ENCODE measurements at regions of chr21 and their contacts with region 1.

Region 1: DNA sequence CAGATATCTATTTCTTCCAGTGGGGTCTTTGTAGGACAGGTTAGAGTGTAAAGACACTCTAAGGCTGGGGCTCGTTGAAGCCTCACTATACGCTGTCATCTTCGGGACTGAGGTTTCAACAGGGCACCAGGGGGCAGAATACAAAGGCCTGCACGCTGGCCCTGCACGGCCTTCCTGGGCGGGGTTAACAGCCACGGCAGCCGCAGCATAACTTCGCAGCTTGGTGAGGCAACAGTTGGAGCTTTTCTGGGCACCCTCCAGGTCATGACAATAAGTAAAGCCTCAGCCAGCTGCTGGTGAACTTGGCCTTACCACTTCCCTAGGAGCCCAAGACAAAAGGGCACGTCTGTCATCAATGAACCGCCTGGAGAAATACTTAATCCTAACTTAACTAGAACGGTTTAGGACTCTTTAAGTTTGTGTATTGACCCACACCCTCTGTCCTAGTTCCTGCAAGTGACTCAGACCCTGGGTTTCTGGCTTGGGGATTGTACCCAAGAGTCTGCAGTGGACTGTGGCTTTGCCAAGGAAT is 2.3 kb upstream of the RUNX1 start:
- DNase-seq: peak; percentile 92
- ATAC-seq: peak; percentile 44
- H3K4me3 Mint-ChIP-seq: peak overlapping the region; percentile 24
- H3K27ac Mint-ChIP-seq: peak overlapping the region; percentile 97
- H3K4me1 Mint-ChIP-seq: peaks cover 57% of the 10 kb centered on the region
- H3K27me3 Mint-ChIP-seq: no peaks in the 10 kb centered on the region
- CTCF ChIP-seq: peak; percentile 64

Region 2: DNA sequence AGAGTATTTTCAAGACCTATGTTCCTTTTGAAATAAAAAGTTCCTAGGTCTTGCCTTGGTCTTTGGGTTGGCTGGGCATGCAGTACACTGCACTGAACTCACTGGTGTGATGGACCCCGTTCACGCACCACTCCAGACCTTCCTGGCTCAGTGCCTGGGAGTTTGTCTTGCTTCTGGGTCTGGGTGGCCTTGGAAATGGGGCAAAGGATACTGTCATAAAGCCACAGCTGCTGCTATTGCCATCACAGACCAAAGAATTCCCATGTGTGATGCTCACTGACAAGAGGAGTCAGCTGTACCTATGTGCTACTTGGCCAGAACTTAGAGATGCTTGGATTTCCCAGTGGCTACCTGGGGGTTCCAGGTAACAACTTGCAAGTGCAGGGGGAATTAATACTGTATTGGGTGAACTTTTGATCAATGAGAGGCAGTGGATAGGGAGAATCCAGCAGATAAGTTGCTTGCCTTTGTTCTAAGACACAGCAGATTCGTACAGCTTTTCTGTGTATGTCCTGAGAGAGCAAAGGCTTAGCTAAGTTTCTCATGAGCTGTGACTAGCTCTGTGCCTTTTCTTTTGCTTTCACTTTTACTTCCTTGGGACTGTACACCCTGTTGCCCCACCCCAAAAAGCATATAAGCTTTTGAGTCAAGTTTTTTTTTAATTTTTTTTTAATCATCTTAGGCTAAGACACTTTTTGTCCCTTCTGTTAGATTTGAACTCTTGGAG is 117.6 kb before region 1 on chr21:
- CTCF ChIA-PET with region 1: interaction called, 7 read pairs
- POLR2A ChIA-PET with region 1: interaction called, 38 read pairs
- intact Hi-C with region 1: no loop called
- DNase-seq: peak; percentile 49
- ATAC-seq: peak; percentile 84
- H3K4me3 Mint-ChIP-seq: peak overlapping the region; percentile 75
- H3K27ac Mint-ChIP-seq: peak overlapping the region; percentile 98
- H3K4me1 Mint-ChIP-seq: peaks cover 82% of the 10 kb centered on the region
- H3K27me3 Mint-ChIP-seq: no peaks in the 10 kb centered on the region
- CTCF ChIP-seq: no peak

Region 3: GRCh38 chr21:34974162-34974981 is 77.0 kb before region 1 on chr21:
- CTCF ChIA-PET with region 1: interaction called, 5 read pairs
- POLR2A ChIA-PET with region 1: interaction called, 12 read pairs
- intact Hi-C with region 1: loop called (anchors 5 kb)
- DNase-seq: peak; percentile 69
- ATAC-seq: peak; percentile 92
- H3K4me3 Mint-ChIP-seq: peak overlapping the region; percentile 52
- H3K27ac Mint-ChIP-seq: peak overlapping the region; percentile 61
- H3K4me1 Mint-ChIP-seq: peaks cover 79% of the 10 kb centered on the region
- H3K27me3 Mint-ChIP-seq: peaks cover 3% of the 10 kb centered on the region
- CTCF ChIP-seq: no peak

Region 4: DNA sequence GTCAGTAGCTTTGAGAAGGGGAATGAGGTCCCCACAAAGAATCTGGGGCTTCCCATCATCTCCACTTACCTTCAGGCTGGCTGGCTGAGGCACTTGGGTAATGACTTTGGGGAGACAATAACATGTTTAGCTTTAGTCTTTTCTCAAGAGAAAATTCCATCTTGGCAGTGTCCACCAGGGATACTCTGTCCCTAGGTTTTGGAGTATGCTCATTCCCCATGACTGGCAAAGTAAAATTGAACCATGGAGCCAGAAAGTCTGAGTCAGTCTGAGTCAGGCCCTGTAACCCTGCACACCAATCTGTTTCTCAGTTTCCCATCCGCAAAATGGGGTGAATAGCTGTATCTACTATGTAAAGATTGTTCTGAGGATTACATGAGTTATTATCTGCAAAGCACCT is 30.5 kb before region 1 on chr21:
- CTCF ChIA-PET with region 1: interaction called, 16 read pairs
- POLR2A ChIA-PET with region 1: interaction called, 100 read pairs
- intact Hi-C with region 1: no loop called
- DNase-seq: no peak
- ATAC-seq: no peak
- H3K4me3 Mint-ChIP-seq: no peak overlapping the region
- H3K27ac Mint-ChIP-seq: peak overlapping the region; percentile 67
- H3K4me1 Mint-ChIP-seq: peaks cover 82% of the 10 kb centered on the region
- H3K27me3 Mint-ChIP-seq: no peaks in the 10 kb centered on the region
- CTCF ChIP-seq: no peak

Region 5: GRCh38 chr21:35086357-35086756 is 35.0 kb after region 1 on chr21:
- CTCF ChIA-PET with region 1: interaction called, 5 read pairs
- POLR2A ChIA-PET with region 1: interaction called, 5 read pairs
- intact Hi-C with region 1: loop called (anchors 2 kb)
- DNase-seq: no peak
- ATAC-seq: no peak
- H3K4me3 Mint-ChIP-seq: no peak overlapping the region
- H3K27ac Mint-ChIP-seq: no peak overlapping the region
- H3K4me1 Mint-ChIP-seq: peaks cover 20% of the 10 kb centered on the region
- H3K27me3 Mint-ChIP-seq: peaks cover 2% of the 10 kb centered on the region
- CTCF ChIP-seq: no peak

Region 6: DNA sequence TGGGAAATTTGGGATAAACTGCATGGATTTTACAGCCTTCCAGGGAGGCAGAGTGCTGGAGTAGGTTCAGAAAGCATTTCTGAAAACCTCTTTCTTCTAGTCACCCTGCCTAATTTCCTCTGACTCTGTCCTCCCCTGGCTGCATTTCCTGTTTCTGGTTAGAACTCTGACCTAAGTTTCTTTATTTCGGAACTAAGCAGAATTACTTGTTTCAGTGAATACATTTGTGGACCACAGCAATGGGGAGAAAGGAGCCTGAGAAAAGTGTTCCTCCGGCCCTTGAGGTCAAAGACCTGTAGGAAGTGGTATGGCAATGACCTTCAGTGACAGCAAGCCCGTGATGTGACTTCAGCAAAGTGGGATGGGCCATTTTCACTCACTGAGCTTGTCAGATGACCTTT is 171.2 kb after region 1 on chr21:
- CTCF ChIA-PET with region 1: interaction called, 5 read pairs
- POLR2A ChIA-PET with region 1: interaction called, 3 read pairs
- intact Hi-C with region 1: loop called (anchors 5 kb)
- DNase-seq: peak; percentile 84
- ATAC-seq: peak; percentile 72
- H3K4me3 Mint-ChIP-seq: no peak overlapping the region
- H3K27ac Mint-ChIP-seq: peak overlapping the region; percentile 66
- H3K4me1 Mint-ChIP-seq: peaks cover 65% of the 10 kb centered on the region
- H3K27me3 Mint-ChIP-seq: no peaks in the 10 kb centered on the region
- CTCF ChIP-seq: no peak